Adrenal gland (tissue), 19 donors: ENCODE measurements at regions of chr2 and their contacts with region 1.

Region 1: GRCh38 chr2:113977660-113978523 is 88.0 kb downstream of the ACTR3 start:
- DNase-seq: peak in 6 of 7 donors; percentile 50 to 70 (median 64)
- H3K4me3 ChIP-seq: no peak overlapping the region
- H3K27ac ChIP-seq: peak overlapping the region in 3 of 5 donors; percentile 11 to 63 (median 52)
- H3K4me1 ChIP-seq: peaks cover 6 to 21% of the 10 kb centered on the region in 2 donors
- H3K27me3 ChIP-seq: no peaks in the 10 kb centered on the region
- CTCF ChIP-seq: peak in 5 of 6 experiments; percentile 53 to 75 (median 67)
- POLR2A ChIP-seq: no peak

Region 2: GRCh38 chr2:114550895-114551793 is 573.3 kb after region 1 on chr2:
- intact Hi-C with region 1: loop called (anchors 5 kb)
- DNase-seq: peak; percentile 49 to 81 (median 67)
- H3K4me3 ChIP-seq: no peak overlapping the region
- H3K27ac ChIP-seq: no peak overlapping the region
- H3K4me1 ChIP-seq: no peaks in the 10 kb centered on the region
- H3K27me3 ChIP-seq: no peaks in the 10 kb centered on the region
- CTCF ChIP-seq: peak; percentile 69 to 83 (median 78)
- POLR2A ChIP-seq: no peak